IMR-90 (cell line): ENCODE measurements at regions of chr11 and their contacts with region 1.

Region 1: GRCh38 chr11:965206-965775 is 39.6 kb downstream of the AP2A2 start:
- DNase-seq: no peak
- ATAC-seq: no peak
- H3K4me3 ChIP-seq: no peak overlapping the region
- H3K27ac ChIP-seq: no peak overlapping the region
- H3K4me1 ChIP-seq: peaks cover 5% of the 10 kb centered on the region
- H3K27me3 ChIP-seq: no peaks in the 10 kb centered on the region
- CTCF ChIP-seq: no peak
- POLR2A ChIP-seq: no peak
- RAD21 ChIP-seq: no peak

Region 2: DNA sequence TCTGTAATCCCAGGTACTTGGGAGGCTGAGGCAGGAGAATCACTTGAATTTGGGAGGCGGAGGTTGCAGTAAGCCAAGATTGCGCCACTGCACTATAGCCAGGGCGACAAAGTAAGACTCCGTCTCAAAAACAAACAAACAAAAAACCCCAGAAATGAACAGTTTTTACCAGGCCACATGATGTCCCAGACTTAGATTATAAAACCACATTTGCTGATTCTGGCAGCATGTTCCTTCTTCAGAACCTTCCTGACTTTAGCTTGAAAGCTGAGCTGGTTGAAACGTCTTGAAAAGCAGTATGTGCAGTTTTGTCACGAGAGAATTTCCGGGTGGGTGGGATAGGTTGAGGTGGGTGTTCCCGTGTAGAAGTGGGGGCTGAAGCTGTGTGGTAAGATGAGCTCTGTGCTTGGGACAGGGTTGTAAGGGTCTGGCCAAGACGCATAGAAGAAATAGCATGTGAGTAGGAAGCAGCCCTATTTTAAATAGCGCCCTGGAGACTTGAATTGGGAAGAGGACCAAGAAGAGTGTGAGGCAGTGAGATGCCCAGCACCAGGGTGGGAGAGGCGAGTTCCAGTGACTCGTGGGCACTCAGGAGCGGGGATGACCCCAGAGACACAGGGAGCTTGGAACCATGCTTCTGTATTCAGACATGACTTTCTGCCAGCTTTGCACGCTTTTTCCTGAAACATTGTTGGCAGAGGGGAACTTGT is 32.0 kb before region 1 on chr11:
- CTCF ChIA-PET with region 1: no interaction called
- POLR2A ChIA-PET with region 1: no interaction called
- dilution Hi-C with region 1: no loop called
- in situ Hi-C with region 1: no loop called
- intact Hi-C with region 1: loop called (anchors 5 kb)
- DNase-seq: no peak
- ATAC-seq: no peak
- H3K4me3 ChIP-seq: no peak overlapping the region
- H3K27ac ChIP-seq: no peak overlapping the region
- H3K4me1 ChIP-seq: peaks cover 4% of the 10 kb centered on the region; the same call in 1 of the 2 replicates
- H3K27me3 ChIP-seq: no peaks in the 10 kb centered on the region
- CTCF ChIP-seq: no peak
- POLR2A ChIP-seq: no peak
- RAD21 ChIP-seq: no peak

Region 3: DNA sequence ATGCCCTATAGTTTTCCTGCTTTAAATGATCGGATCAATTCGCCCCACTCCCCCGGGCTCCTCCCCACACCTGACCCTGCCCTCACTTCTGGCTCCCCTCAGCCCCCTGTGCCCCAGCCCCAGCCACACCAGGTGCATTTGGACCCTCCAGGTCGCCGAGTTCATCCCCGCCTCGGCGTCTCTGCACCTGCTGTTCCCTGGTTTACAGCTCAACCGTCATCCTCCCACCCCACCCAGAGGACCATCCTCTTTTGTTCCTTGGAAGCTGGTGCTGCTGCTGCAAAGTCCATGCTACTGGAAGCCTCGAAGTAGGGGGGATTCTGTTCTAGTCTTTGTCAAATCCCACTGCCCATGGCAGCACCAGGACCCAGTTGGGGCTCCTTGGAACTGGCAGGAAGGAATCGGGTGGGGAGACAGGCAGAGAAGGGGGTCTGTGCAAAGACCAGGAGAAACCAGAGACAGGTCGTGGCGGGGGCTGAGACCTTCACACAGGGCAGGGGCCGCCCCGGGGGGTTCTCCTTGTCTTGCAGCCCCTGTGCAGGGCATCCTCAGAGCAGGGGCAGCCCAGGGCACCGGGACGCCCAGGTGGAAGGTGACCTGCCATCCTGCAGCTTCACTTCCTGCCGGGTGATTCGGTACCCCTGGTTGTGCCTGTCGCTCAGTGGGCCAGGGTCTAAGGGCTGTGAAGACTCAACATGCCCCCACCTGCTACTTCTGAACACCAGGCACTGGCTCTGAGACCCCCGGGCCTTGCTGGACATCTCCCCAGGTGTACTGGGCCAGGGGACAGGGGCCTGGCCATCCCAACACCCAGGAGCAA is 253.2 kb after region 1 on chr11:
- CTCF ChIA-PET with region 1: no interaction called
- POLR2A ChIA-PET with region 1: no interaction called
- dilution Hi-C with region 1: no loop called
- in situ Hi-C with region 1: no loop called
- intact Hi-C with region 1: no loop called
- DNase-seq: no peak
- ATAC-seq: no peak
- H3K4me3 ChIP-seq: no peak overlapping the region
- H3K27ac ChIP-seq: no peak overlapping the region
- H3K4me1 ChIP-seq: no peaks in the 10 kb centered on the region
- H3K27me3 ChIP-seq: peaks cover 11% of the 10 kb centered on the region
- CTCF ChIP-seq: no peak
- POLR2A ChIP-seq: no peak
- RAD21 ChIP-seq: no peak